ENCODE measurements at regions of chr3 and their contacts with region 1.

Region 1: DNA sequence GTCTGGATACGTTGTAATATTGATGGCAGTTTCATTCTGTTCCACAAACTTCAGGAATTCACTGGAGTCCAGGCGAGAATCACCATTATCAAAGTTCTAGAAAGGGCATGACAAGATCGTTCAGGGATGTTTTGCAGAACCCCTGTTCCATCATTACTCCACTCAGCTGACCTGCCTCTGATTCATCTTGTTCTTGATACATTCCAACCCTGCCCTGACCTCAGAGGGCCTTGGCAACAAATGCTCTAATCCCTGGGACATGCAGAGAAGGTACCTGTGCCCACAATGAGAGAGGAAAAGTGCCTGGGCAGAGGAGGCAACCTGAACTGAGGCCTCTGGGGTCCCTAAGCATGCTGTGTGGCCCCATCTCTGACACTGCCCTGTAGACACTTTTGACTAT is 45.9 kb downstream of the FSTL1 start:
- DNase-seq: no peak
- H3K4me3 ChIP-seq: no peak overlapping the region
- H3K27ac ChIP-seq: no peak overlapping the region
- H3K4me1 ChIP-seq: no peaks in the 10 kb centered on the region
- H3K27me3 ChIP-seq: no peaks in the 10 kb centered on the region
- CTCF ChIP-seq: no peak
- POLR2A ChIP-seq: no peak

Region 2: DNA sequence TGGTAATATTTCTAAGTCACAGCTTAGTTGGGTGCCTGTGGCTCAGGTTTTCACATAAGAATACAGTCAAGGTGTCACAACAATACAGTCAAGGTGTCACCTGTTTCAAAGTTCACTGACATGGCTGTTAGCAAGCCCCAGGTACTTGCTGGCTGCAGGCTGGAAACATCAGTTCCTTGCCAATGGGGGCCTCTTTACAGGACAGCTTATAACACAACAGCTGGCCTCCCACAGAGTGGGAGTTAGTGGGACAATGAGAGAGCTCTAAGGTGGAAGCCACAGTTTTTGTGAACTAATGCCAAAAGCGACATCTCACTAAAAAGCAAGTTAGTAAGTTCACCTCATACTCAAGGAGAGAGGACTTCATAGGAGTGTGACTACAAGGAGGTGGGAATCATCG is 165.2 kb before region 1 on chr3:
- intact Hi-C with region 1: loop called (anchors 5 to 10 kb)
- DNase-seq: no peak
- H3K4me3 ChIP-seq: no peak overlapping the region
- H3K27ac ChIP-seq: no peak overlapping the region
- H3K4me1 ChIP-seq: no peaks in the 10 kb centered on the region
- H3K27me3 ChIP-seq: no peaks in the 10 kb centered on the region
- CTCF ChIP-seq: no peak
- POLR2A ChIP-seq: no peak

Region 3: GRCh38 chr3:120245386-120245785 is 159.5 kb before region 1 on chr3:
- intact Hi-C with region 1: loop called (anchors 5 to 10 kb)
- DNase-seq: no peak
- H3K4me3 ChIP-seq: no peak overlapping the region
- H3K27ac ChIP-seq: no peak overlapping the region
- H3K4me1 ChIP-seq: no peaks in the 10 kb centered on the region
- H3K27me3 ChIP-seq: no peaks in the 10 kb centered on the region
- CTCF ChIP-seq: no peak
- POLR2A ChIP-seq: no peak

Region 4: DNA sequence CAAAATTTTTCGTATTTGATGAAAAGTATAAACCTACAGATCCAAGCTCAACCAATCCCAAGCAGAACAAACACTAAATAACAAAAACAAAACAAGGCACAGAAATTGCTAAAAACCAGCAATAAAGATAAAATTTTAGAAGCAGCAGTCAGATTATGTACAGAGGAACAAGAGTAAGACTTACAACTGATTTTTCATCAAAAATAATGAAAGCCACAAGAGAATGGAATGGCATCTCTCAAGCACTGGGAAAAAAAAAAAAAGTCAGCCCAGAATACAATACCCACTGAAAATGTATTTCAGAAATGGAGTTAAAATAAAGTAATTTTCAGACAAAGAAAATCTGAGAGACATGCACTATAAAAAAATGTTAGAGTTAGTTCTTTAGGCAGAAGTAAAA is 146.9 kb before region 1 on chr3:
- intact Hi-C with region 1: no loop called
- DNase-seq: no peak
- H3K4me3 ChIP-seq: no peak overlapping the region
- H3K27ac ChIP-seq: no peak overlapping the region
- H3K4me1 ChIP-seq: no peaks in the 10 kb centered on the region
- H3K27me3 ChIP-seq: no peaks in the 10 kb centered on the region
- CTCF ChIP-seq: no peak
- POLR2A ChIP-seq: no peak

Measured in adrenal gland (tissue), 19 donors.